Endothelial cell of umbilical vein (primary cell): ENCODE measurements at regions of chr14 and their contacts with region 1.

Region 1: GRCh38 chr14:24093901-24094761 is at the start of gene PCK2:
- DNase-seq: peak; percentile 72
- H3K4me3 ChIP-seq: peak within 1 kb of the TSS; percentile 71 to 82 (median 74)
- H3K27ac ChIP-seq: peak within 1 kb of the TSS; percentile 46
- H3K4me1 ChIP-seq: peaks cover 9% of the 10 kb centered on the region
- H3K27me3 ChIP-seq: no peaks in the 10 kb centered on the region
- CTCF ChIP-seq: peak in 1 of 2 donors; percentile 9
- POLR2A ChIP-seq: peak; percentile 77
- total RNA-seq, gene PCK2: 24.5 and 25.1 TPM in 2 replicates

Region 2: DNA sequence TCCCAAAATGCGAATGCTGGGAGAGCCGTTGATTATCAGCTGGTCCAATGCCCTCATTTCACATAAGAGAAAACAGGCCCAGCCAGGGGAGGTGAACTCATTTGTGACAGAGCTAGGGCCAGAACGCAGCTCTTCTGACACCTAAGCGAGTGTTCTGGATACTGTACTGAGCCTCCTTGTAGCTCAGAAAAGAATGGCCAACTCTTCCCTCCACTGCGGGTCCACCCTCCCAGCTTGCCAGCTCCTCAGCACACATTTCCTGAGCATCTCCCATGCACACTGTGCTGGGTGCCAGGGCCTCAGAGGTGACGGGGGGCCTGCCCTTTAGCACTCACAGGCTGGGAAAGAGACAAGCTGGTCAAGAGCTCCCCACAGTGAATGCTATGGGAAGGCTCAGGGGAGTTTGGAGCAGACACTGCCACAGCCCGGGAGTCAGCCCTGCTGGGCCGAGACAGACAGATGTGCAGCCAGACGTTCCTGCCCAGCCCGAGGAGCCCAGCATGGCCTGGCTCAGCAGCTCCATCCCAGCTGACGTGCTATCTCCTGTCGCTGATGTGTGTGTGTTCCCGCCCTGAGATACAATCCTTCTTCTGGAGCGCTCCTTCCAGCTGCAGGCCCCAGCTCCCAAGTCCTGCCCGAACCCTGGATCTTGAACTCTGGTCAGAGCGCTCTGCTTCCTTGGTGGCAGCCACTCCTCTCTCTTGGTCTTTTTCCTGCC is 713.8 kb before region 1 on chr14:
- CTCF ChIA-PET with region 1: no interaction called
- POLR2A ChIA-PET with region 1: no interaction called
- dilution Hi-C with region 1: no loop called
- intact Hi-C with region 1: no loop called
- DNase-seq: no peak
- H3K4me3 ChIP-seq: no peak overlapping the region
- H3K27ac ChIP-seq: no peak overlapping the region
- H3K4me1 ChIP-seq: no peaks in the 10 kb centered on the region
- H3K27me3 ChIP-seq: no peaks in the 10 kb centered on the region
- CTCF ChIP-seq: no peak
- POLR2A ChIP-seq: no peak

Region 3: DNA sequence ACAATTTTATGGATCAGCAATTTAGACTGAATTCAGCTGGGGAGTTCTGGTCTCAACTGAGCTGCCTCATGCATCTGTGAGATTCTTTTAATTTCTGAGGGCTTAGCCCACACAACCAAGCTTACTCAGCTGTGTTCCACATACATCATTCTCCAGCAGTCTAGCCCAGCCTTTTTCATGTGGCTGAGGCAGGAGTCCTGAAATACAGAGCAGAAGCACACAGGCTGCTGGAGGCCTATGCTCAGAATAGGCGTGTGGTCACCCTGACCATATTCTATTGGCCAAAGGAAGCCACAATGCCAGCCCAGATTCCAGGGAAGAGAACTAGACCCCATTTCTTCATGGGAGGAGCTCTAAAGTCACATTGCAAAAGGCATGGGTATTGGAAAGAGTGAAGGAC is 212.8 kb before region 1 on chr14:
- CTCF ChIA-PET with region 1: no interaction called
- POLR2A ChIA-PET with region 1: no interaction called
- dilution Hi-C with region 1: no loop called
- intact Hi-C with region 1: no loop called
- DNase-seq: no peak
- H3K4me3 ChIP-seq: no peak overlapping the region
- H3K27ac ChIP-seq: no peak overlapping the region
- H3K4me1 ChIP-seq: no peaks in the 10 kb centered on the region
- H3K27me3 ChIP-seq: peaks cover 6 to 17% of the 10 kb centered on the region in 2 experiments
- CTCF ChIP-seq: no peak
- POLR2A ChIP-seq: no peak

Region 4: DNA sequence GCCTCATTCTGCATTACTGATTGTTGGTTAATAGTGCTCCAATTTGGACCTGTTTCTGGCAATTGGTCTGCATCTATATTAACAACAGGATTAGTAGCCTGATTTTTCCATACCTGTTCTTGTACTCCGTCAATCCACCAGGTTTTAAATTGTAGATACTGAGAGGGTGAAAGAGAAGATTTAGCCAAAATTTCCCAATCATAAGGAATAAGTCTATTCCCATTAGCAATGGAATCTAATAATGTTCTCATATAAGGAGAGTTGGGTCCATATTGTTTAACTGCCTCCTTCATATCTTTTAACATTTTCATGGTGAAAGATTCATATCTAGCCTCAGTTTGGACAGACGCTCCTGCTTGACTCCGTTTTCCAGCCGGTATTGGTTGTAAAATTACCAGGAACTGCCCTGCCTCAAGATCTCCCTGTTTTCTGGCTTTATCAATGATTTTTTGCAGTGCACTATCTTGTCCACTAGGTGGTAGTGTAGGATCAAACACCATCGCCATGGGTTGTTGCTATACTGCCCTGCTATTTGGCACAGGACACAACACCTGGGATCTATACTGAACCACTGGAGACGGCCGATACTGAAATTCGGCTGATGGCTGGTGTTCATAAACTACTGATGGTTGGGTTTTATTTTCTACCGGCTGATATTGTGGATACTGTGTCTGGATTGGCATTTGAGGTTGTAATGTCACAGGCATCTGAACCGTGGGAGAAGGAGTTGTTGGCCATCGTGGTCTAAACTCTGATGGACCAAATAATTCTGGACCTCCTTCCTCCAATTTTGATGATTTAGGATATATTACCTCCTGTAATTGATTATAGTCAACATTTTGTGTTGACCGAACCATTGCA is 80.2 kb before region 1 on chr14:
- CTCF ChIA-PET with region 1: no interaction called
- POLR2A ChIA-PET with region 1: no interaction called
- dilution Hi-C with region 1: no loop called
- intact Hi-C with region 1: loop called (anchors 1 kb)
- DNase-seq: peak; percentile 82
- H3K4me3 ChIP-seq: no peak overlapping the region
- H3K27ac ChIP-seq: no peak overlapping the region
- H3K4me1 ChIP-seq: peaks cover 3% of the 10 kb centered on the region
- H3K27me3 ChIP-seq: peaks cover 0 to 2% of the 10 kb centered on the region in 2 experiments
- CTCF ChIP-seq: peak; percentile 64 to 72
- POLR2A ChIP-seq: no peak

Region 5: DNA sequence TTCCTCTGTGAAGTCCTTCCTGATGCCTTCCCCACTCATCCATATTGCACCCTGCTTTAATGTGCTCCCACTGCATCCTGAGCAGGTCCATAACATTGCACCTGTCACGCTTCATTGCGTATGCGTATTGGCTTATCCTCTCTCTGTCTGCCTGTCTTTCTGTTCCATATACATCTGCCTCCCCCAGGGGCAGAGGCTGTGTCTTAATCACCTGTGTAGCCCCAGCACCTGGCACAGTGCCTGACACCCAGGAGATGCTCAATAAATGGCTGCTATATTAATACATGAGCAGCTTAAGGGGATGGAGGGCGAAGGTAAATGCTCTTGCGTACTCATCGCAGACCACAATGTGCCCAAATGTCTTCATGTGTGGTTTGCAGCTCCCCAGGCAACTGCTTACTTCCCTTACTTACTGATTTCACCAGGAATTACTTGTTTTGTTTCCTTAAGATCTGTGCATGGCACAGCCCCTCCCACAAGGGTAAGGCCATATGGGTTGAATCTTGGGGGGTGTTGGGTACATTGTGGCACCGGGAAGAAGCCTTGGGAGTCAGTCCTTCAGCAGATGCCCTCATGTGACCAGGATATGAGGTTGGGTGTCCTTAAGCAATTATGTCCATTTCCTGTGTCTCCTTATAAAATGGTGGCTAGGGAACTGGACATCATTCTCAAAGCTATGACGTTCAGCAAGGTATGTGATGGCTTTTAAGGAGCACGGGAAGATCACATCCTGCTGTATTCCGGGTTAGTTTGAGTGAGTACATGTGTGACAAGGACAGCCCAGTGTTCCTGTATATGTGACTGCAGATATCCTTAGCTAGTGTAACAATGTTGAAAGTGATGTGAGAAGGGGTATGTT is 23.6 kb before region 1 on chr14:
- CTCF ChIA-PET with region 1: interaction called, 14 read pairs
- POLR2A ChIA-PET with region 1: no interaction called
- dilution Hi-C with region 1: no loop called
- intact Hi-C with region 1: no loop called
- DNase-seq: no peak
- H3K4me3 ChIP-seq: no peak overlapping the region
- H3K27ac ChIP-seq: no peak overlapping the region
- H3K4me1 ChIP-seq: no peaks in the 10 kb centered on the region
- H3K27me3 ChIP-seq: no peaks in the 10 kb centered on the region
- CTCF ChIP-seq: no peak
- POLR2A ChIP-seq: no peak

Region 6: DNA sequence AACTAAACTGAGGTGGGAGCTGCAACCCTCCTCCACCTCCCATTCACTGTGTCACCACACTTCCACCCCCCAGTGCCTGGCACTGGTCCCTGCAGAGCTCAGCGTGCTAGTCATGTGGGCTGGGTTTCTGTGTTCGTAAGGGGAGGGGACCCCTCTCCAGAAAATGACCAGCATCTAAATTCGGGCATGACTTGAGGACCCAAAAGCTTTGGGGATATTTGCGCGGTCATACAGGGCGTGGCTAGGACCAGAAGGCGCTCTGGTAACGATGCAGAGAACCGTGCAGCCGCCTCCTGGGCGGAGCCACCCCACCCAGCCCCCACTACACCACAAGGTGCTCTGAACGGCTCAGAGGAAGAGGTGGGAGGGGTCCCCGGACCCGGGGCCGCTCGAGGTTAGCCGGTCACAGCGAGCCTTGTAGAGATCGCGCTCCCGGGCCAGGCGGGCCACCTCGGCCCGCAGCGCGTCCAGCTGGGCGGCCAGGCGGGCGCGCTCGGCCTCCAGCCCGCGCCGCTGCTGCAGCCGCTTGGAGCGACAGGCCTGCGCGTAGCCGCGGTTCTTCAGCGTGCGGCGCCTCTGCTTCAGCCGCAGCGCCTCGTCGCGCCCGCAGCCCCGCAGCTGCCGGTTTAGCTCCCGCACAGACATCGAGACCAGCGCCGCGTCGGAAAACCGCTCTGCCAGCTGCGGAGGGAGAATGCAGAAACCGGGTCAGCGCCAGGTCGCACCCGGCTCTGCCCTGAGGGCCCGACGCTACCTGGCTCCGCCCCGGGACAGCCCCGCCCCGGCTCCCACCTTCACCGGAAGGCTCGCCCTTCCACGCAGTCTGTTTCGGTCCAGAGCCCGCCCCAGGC is 13.0 kb before region 1 on chr14:
- CTCF ChIA-PET with region 1: interaction called, 40 read pairs
- POLR2A ChIA-PET with region 1: no interaction called
- dilution Hi-C with region 1: no loop called
- intact Hi-C with region 1: no loop called
- DNase-seq: peak; percentile 7
- H3K4me3 ChIP-seq: peak overlapping the region; percentile 1 to 31 (median 25)
- H3K27ac ChIP-seq: no peak overlapping the region
- H3K4me1 ChIP-seq: no peaks in the 10 kb centered on the region
- H3K27me3 ChIP-seq: peaks cover 28 to 35% of the 10 kb centered on the region in 2 experiments
- CTCF ChIP-seq: no peak
- POLR2A ChIP-seq: no peak

Region 7: DNA sequence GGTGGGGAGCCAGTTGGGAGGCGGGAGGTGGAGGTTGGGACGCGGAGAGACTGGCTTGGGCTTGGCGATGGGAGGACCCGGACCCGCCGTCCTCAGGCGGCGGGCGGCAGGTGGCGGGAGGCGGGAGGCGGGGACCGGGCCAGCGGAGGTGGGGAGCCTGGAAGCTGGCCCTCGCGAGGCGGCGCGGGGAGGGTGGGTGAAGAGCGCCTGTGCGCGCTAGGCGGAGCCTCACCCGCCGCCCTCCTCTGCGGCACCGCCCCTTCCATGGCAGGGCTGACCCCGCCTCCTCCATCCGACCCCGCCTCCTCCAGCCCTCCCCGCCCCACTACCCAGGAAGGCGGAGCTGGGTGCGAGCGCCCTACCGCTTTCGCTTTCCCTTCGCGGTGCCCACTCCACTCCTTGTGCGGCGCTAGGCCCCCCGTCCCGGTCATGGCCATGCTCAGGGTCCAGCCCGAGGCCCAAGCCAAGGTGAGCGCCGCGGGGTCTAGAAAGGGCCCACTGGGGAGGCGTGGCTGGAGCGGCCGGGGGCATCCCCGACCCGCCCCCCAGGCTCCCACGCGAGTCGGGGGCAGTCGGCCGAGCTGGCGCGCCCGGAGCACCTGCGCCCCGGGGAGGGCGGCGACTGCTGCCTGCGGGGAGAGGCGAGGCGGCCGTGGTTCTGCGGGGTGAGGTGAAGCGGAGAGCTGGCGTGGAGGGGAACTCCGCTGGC is 41.9 kb after region 1 on chr14 and contains the start of gene PSME1:
- CTCF ChIA-PET with region 1: interaction called, 3 read pairs
- POLR2A ChIA-PET with region 1: no interaction called
- dilution Hi-C with region 1: no loop called
- intact Hi-C with region 1: loop called (anchors 1 kb)
- DNase-seq: peak; percentile 92
- H3K4me3 ChIP-seq: peak within 1 kb of the TSS; percentile 56 to 93 (median 90)
- H3K27ac ChIP-seq: peak within 1 kb of the TSS; percentile 54
- H3K4me1 ChIP-seq: peaks cover 15% of the 10 kb centered on the region
- H3K27me3 ChIP-seq: no peaks in the 10 kb centered on the region
- CTCF ChIP-seq: no peak
- POLR2A ChIP-seq: peak; percentile 78
- total RNA-seq, gene PSME1: 120 and 135 TPM in 2 replicates

Region 8: GRCh38 chr14:24141097-24141880 is 47.2 kb after region 1 on chr14 and contains the start of gene EMC9:
- CTCF ChIA-PET with region 1: interaction called, 3 read pairs
- POLR2A ChIA-PET with region 1: no interaction called
- dilution Hi-C with region 1: no loop called
- intact Hi-C with region 1: loop called (anchors 1 kb)
- DNase-seq: peak; percentile 100
- H3K4me3 ChIP-seq: peak within 1 kb of the TSS; percentile 79 to 99 (median 81)
- H3K27ac ChIP-seq: peak within 1 kb of the TSS; percentile 42
- H3K4me1 ChIP-seq: peaks cover 24% of the 10 kb centered on the region
- H3K27me3 ChIP-seq: no peaks in the 10 kb centered on the region
- CTCF ChIP-seq: peak; percentile 28 to 53
- POLR2A ChIP-seq: peak; percentile 78
- total RNA-seq, gene EMC9: 19.0 and 21.8 TPM in 2 replicates

Region 9: GRCh38 chr14:24665440-24665991 is 571.4 kb after region 1 on chr14:
- CTCF ChIA-PET with region 1: no interaction called
- POLR2A ChIA-PET with region 1: no interaction called
- dilution Hi-C with region 1: no loop called
- intact Hi-C with region 1: no loop called
- DNase-seq: no peak
- H3K4me3 ChIP-seq: no peak overlapping the region
- H3K27ac ChIP-seq: no peak overlapping the region
- H3K4me1 ChIP-seq: no peaks in the 10 kb centered on the region
- H3K27me3 ChIP-seq: no peaks in the 10 kb centered on the region
- CTCF ChIP-seq: no peak
- POLR2A ChIP-seq: no peak